HEK293T (cell line): ENCODE measurements at regions of chr10 and their contacts with region 1.

Region 1: DNA sequence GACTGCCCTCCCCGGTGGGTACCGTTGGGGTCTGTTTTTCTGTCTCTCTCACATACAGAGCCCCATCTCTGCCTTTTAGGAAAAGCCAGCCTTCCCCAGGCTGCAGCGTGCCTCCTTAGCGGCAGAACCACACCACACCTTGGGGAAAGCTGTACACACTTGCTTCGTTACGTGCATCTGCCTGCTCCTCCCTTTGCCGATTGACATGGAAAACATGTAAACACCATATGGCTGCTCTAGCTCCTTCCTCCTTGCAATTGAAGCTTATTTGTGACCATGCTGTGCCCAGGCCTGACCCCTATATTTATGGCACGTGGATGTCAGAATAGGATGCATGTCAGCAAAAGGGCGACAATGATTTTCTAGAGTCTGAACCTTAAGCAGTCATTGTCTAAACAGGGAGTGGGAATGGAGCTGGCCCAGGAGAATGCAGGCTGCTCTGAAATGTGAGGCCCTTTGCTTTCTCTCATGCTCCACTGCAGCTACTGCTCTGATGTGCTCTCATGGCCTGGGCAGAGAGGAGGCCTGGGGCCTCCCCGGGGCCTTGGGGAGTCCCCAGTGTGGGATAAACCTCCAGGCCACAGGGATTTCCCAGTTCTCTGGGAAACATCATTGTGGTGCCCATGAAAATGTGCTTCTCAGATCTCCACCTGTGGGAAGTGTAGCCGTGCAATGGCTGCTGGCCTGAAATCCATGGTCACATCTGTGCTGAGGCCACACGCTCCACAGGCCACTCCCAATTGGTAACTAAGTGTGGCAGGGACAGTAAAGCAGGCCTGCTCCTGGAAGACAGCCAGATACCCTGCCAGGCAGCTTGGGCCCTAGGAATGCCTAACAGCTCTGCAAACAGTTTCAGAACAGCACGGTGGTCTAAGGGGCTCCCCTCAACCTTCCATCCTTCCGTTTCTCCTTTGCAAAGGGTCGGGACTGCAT is 18.6 kb downstream of the PDE6C start:
- DNase-seq: no peak

Region 2: DNA sequence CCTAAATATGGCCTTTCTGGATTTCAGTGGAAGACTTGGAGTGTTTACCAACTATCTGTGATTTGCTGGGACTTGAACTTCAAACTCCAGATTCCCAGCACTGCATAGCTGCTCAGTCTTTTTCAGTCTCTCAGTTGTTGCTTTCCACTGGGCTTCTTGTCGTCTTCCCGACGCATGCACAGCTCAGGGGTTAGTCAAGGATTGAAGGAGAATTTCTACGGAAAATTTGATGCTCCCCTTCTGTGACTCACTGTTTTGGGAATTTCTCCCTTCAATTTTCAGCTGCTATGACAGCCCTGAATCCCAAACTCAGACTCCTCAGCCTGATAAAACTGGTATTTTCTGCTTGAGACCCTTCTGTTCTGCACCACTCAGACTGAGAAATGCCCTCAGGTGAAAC is 465.5 kb before region 1 on chr10:
- CTCF ChIA-PET with region 1: no interaction called
- POLR2A ChIA-PET with region 1: no interaction called
- DNase-seq: no peak

Region 3: GRCh38 chr10:93461807-93462178 is 169.1 kb before region 1 on chr10:
- CTCF ChIA-PET with region 1: no interaction called
- POLR2A ChIA-PET with region 1: no interaction called
- DNase-seq: no peak

Region 4: GRCh38 chr10:93496322-93497041 is 134.4 kb before region 1 on chr10 and contains the start of gene CEP55:
- CTCF ChIA-PET with region 1: no interaction called
- POLR2A ChIA-PET with region 1: no interaction called
- DNase-seq: peak; percentile 98

Region 5: DNA sequence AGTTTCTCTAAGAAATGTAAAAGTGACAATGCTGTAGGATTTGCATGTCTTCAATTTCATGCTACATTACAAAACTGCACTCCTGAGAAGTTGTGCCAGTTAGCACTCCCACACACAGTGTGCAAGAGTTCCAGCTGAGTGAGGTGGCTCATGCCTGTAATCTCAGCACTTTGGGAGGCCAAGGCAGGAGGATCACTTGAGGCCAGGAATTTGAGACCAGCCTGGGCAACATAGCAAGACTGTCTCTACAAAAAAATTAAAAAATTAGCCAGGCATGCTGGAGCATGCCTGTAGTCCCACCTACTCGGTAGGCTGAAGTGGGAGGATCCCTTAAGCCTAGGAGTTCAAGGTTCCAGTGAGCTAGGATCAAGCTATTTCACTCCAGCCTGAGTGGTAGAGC is 26.9 kb after region 1 on chr10:
- CTCF ChIA-PET with region 1: interaction called, 10 read pairs
- POLR2A ChIA-PET with region 1: no interaction called
- DNase-seq: no peak